Activated CD4-positive, alpha-beta memory T cell treated with anti-CD3 and anti-CD28 coated beads for 36 hours (primary cell): ENCODE measurements at regions of chr10 and their contacts with region 1.

Region 1: GRCh38 chr10:103745341-103746227 is 109.8 kb downstream of the SH3PXD2A start:
- DNase-seq: peak; percentile 90
- H3K4me3 Mint-ChIP-seq: peak overlapping the region; percentile 27
- H3K27ac Mint-ChIP-seq: peak overlapping the region; percentile 86
- H3K4me1 Mint-ChIP-seq: peaks cover 43% of the 10 kb centered on the region
- H3K27me3 Mint-ChIP-seq: no peaks in the 10 kb centered on the region

Region 2: DNA sequence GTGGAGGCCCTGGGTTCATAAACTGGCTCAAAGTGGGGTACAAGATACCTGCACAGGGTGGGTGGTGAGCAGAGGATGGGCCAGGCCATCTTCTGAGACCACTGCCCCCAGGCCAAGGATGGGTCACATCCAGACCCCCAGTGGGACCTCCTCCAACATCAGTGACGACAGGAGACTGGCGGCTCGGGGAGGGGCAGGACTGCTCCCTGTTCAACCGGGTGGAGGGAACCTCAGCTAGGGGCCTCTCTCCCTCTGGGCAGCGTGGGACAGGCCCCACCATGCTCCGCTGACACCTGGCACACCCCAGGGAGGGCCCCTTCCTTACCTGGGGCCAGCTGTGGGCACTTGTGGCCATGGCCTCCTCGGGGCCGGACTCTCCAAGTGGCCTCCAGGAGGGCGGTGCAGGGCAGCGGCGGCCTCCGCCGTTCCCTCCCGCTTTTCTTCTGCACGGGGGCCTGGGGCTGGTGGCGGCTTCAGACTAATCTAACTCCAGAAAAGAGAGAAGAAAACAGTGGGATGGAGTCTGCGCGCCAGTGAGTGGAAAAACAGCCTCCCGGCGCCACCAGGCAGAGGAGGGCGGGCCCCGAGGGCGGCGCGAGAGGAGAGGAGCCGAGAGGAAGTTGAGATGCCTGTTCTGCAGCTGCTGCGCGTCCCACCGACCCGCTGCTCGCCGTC is 293.6 kb before region 1 on chr10 and contains the start of gene CALHM2:
- CTCF ChIA-PET with region 1: no interaction called
- POLR2A ChIA-PET with region 1: no interaction called
- intact Hi-C with region 1: no loop called
- DNase-seq: peak; percentile 75
- H3K4me3 Mint-ChIP-seq: peak within 1 kb of the TSS; percentile 90
- H3K27ac Mint-ChIP-seq: peak within 1 kb of the TSS; percentile 91
- H3K4me1 Mint-ChIP-seq: peaks cover 44% of the 10 kb centered on the region
- H3K27me3 Mint-ChIP-seq: no peaks in the 10 kb centered on the region
- total RNA-seq, gene CALHM2: 21.6 to 22.5 TPM

Region 3: GRCh38 chr10:103759100-103759781 is 13.7 kb after region 1 on chr10:
- CTCF ChIA-PET with region 1: interaction called, 61 read pairs
- POLR2A ChIA-PET with region 1: interaction called, 18 read pairs
- intact Hi-C with region 1: loop called (anchors 1 kb)
- DNase-seq: peak; percentile 72
- H3K4me3 Mint-ChIP-seq: peak overlapping the region; percentile 38
- H3K27ac Mint-ChIP-seq: peak overlapping the region; percentile 70
- H3K4me1 Mint-ChIP-seq: peaks cover 52% of the 10 kb centered on the region
- H3K27me3 Mint-ChIP-seq: no peaks in the 10 kb centered on the region

Region 4: DNA sequence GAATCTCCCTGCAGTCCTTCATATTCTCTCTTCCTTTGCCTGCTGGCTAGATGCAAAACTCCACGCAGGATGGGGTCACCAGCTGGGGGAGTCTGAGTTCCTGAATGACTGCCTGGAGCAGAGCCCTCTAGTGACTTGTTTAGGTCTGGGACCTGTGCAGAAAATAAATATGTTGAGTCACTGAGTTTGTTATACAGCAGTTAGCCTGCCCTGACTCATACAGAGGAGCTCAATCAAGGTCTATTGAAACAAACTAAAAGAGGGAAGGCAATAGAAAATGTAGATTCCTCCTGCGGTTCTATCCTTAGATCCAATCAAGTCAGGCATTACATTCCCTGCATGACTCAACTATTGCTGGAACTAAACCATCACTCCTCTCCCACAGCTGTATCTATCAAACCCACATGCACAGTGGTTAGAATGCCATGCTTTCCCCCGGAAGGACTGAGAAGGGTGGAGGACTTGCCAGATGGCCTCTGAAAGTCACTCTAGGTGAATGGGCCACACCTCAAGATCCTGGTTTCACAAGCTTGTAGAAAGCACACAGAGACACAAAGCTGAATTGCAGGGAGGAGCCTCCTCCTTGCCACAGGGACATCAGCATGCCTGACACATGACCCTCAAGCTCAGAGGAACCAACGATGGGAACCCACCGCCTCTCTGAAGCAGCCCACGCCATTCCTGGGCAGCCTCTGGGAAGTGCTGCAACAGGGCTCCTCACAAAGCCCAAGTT is 35.9 kb after region 1 on chr10:
- CTCF ChIA-PET with region 1: interaction called, 5 read pairs
- POLR2A ChIA-PET with region 1: no interaction called
- intact Hi-C with region 1: loop called (anchors 5 kb)
- DNase-seq: peak; percentile 36
- H3K4me3 Mint-ChIP-seq: no peak overlapping the region
- H3K27ac Mint-ChIP-seq: no peak overlapping the region
- H3K4me1 Mint-ChIP-seq: peaks cover 16% of the 10 kb centered on the region
- H3K27me3 Mint-ChIP-seq: peaks cover 5% of the 10 kb centered on the region

Region 5: DNA sequence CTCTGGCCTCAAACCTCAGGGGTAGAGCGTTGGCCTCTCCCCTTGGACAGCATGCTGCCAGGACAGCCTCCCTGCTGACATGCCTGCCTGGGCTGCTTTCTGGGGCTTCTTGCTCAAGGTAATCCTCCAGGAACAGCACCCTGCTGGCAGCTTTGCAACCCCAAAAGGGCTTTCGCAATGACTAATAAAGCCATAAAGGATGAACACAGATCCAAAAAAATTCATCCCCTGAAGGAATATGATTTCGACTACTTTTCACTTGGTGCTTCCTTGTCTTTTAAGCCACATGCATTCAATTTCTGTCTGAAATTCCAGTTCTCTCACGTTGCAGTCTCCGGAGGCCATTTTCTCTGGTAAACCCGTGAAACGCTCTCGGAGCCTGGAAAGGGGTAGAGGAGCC is 124.9 kb after region 1 on chr10:
- CTCF ChIA-PET with region 1: no interaction called
- POLR2A ChIA-PET with region 1: no interaction called
- intact Hi-C with region 1: no loop called
- DNase-seq: no peak
- H3K4me3 Mint-ChIP-seq: no peak overlapping the region
- H3K27ac Mint-ChIP-seq: no peak overlapping the region
- H3K4me1 Mint-ChIP-seq: no peaks in the 10 kb centered on the region
- H3K27me3 Mint-ChIP-seq: no peaks in the 10 kb centered on the region

Region 6: DNA sequence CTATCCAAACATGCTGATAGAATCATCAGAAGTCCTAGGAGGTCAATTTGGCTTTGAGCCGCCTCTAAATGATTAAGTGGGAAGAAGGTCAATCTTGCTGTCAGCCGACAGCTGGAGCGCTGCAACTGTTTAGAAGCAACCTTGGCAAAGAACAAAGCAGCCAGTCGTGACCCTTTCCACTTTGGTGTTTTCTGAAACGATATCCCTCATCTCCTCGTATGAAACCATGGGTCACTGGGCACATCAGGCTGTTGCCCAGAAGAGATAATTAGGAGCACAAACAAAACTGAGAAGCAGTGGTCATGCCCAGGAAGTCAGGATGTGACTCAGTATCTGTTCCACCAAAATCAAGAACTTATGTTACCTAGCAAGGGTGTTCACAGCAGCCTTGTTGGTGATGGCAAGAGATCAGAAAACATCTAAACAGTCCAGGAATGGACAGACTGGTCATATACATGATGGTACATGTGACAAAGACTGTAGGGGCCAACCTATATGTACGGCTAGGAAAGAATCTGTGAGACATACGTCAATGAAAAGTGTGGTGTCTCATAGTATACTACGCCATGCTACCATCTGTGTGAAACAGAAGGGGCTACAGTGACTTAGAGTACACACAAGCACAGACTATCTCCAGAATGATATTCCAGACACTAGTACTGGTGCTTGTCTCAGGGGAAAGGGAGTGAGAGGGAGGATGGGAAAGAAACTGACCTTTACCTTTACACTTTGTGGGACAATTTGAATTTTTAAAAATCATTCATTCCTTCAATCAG is 150.0 kb after region 1 on chr10:
- CTCF ChIA-PET with region 1: no interaction called
- POLR2A ChIA-PET with region 1: no interaction called
- intact Hi-C with region 1: loop called (anchors 1 kb)
- DNase-seq: peak; percentile 45
- H3K4me3 Mint-ChIP-seq: no peak overlapping the region
- H3K27ac Mint-ChIP-seq: peak overlapping the region; percentile 82
- H3K4me1 Mint-ChIP-seq: peaks cover 65% of the 10 kb centered on the region
- H3K27me3 Mint-ChIP-seq: no peaks in the 10 kb centered on the region